ENCODE measurements at regions of chr6 and their contacts with region 1.

Region 1: GRCh38 chr6:251920-252319 is 40.4 kb upstream of the DUSP22 start:
- DNase-seq: peak; percentile 70
- ATAC-seq: peak; percentile 79
- H3K4me3 ChIP-seq: no peak overlapping the region
- H3K27ac ChIP-seq: peak overlapping the region; percentile 66
- H3K4me1 ChIP-seq: peaks cover 42% of the 10 kb centered on the region
- H3K27me3 ChIP-seq: no peaks in the 10 kb centered on the region
- CTCF ChIP-seq: no peak
- EP300 ChIP-seq: no peak
- POLR2A ChIP-seq: no peak
- RAD21 ChIP-seq: peak; percentile 17; the same call in 1 of the 2 replicates

Region 2: DNA sequence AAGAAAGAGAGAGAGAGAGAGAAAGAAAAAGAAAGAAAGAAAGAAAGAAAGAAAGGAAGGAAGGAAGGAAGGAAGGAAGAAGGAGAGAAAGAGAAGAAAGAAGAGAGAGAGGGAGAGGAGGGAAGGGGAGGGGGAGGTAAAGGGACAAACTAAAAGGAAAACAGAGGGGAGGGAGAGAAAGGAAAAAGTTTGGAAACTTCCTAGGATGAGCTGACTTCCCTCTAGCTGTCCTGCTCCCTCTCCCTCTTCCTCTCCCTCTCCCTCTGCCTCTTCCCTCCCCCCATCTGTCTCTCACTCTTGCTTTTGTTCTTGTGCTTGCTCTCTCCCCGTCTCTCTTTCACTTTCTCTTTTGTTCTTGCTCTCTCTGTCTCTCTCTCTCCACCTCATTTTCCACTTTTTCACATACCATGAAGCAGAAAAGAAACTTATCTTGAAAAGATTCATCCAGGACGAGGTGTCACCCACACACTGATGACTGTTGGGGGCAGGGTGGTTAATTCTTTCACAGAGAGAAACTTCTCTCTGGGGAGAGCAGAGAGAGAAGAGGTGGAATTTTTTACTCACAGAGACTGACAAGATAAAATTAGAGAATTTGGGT is 16.1 kb before region 1 on chr6:
- CTCF ChIA-PET with region 1: interaction called, 4 read pairs
- POLR2A ChIA-PET with region 1: interaction called, 4 read pairs
- RAD21 ChIA-PET with region 1: interaction called, 6 read pairs
- SMC1A ChIA-PET with region 1: interaction called, 37 read pairs
- in situ Hi-C with region 1: no loop called
- intact Hi-C with region 1: no loop called
- DNase-seq: peak; percentile 85
- ATAC-seq: peak; percentile 78
- H3K4me3 ChIP-seq: peak overlapping the region; percentile 16; the same call in 1 of the 2 replicates
- H3K27ac ChIP-seq: peak overlapping the region; percentile 87
- H3K4me1 ChIP-seq: peaks cover 51% of the 10 kb centered on the region
- H3K27me3 ChIP-seq: no peaks in the 10 kb centered on the region
- CTCF ChIP-seq: no peak
- EP300 ChIP-seq: peak in 1 of 2 experiments; percentile 73; a peak in 2 of 4 replicates
- POLR2A ChIP-seq: no peak
- RAD21 ChIP-seq: peak; percentile 37; the same call in 1 of the 2 replicates